ENCODE measurements at regions of chr5 and their contacts with region 1.

Region 1: DNA sequence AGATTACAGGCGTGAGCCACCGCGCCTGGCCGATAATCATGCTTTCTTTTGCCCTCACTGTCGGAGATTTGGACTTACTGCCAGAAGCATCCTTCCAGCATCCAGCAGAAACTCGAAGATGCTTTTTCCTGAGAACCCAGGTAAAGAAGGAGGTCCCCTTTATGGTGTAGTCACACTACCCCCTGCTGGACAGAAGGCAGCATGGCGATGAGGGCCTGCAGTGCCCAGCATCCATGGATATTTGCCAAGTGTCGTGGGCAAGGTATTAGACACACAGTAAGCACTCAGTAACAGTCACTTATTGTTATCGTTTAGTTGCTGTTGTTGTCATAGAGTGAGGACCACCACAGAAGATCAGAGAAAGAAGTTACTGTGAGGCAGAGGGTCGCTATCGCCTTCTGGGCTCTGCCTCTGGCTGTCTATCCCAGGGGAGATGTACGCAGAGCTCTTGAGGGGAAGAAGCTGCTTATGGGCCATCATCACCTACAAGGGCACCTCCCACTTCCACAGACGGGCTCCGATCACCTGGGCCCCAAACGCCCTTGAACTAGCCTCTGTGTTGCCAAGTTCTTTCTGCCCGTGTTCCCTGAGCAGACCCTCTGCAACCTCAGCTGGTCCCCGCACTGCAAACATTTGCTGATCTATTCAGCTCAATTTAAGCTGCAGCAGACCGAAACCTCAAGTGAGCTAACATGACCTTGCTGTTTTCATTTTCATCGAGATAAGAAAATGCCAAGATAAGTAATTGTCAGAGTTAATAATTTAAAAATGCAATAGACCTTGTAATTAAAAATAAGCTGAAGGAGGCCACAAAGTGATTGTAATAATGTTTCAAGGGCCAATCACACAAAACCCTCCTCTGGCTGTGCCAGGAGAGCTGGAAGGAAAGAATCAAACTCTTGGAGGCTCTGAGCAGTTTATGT is 23.9 kb downstream of the C5orf15 start:
- DNase-seq: peak; percentile 77
- ATAC-seq: peak; percentile 88
- H3K4me3 ChIP-seq: no peak overlapping the region
- H3K4me3 Mint-ChIP-seq: no peak overlapping the region
- H3K27ac ChIP-seq: no peak overlapping the region
- H3K27ac Mint-ChIP-seq: no peak overlapping the region
- H3K4me1 ChIP-seq: peaks cover 31 to 47% of the 10 kb centered on the region in 2 donors
- H3K4me1 Mint-ChIP-seq: peaks cover 36% of the 10 kb centered on the region
- H3K27me3 ChIP-seq: no peaks in the 10 kb centered on the region
- H3K27me3 Mint-ChIP-seq: no peaks in the 10 kb centered on the region
- CTCF ChIP-seq: peak; percentile 88

Region 2: GRCh38 chr5:133111299-133111698 is 833.2 kb before region 1 on chr5:
- CTCF ChIA-PET with region 1: interaction called, 14 read pairs
- POLR2A ChIA-PET with region 1: no interaction called
- intact Hi-C with region 1: loop called (anchors 1 kb)
- DNase-seq: peak; percentile 88
- ATAC-seq: peak; percentile 60
- H3K4me3 ChIP-seq: no peak overlapping the region
- H3K4me3 Mint-ChIP-seq: no peak overlapping the region
- H3K27ac ChIP-seq: no peak overlapping the region
- H3K27ac Mint-ChIP-seq: peak overlapping the region; percentile 0
- H3K4me1 ChIP-seq: peaks cover 37 to 39% of the 10 kb centered on the region in 2 donors
- H3K4me1 Mint-ChIP-seq: peaks cover 59% of the 10 kb centered on the region
- H3K27me3 ChIP-seq: no peaks in the 10 kb centered on the region
- H3K27me3 Mint-ChIP-seq: no peaks in the 10 kb centered on the region
- CTCF ChIP-seq: peak; percentile 97

Region 3: DNA sequence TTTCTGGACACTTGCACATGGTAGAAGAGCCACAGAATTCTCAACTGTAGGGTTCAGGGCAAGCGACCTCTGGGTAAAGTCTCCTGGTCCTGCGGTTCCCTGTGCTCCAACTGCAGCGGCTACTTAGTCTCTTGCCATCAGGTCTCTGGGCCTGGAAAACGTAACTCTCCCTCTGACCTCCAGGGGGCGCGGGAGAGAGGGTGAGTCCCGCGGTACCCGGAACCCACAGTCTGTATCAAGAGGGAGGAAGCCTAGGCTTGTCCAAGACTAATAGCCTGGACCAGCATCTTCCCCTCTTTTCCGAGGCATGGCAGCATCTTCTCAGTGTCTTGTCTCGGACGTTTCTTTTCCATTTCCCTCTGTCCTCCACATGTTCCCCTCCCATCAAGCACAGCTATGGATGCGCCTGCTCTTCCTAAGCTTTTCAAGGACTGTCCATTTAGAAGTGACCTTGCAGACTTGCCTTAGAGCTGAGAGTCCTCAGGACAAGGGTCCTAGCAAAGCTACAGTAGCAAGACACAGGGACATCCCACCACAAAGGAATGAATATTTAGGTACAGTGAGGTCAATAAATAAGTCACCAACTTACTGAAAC is 391.5 kb before region 1 on chr5:
- CTCF ChIA-PET with region 1: interaction called, 10 read pairs
- POLR2A ChIA-PET with region 1: no interaction called
- intact Hi-C with region 1: no loop called
- DNase-seq: peak; percentile 76
- ATAC-seq: peak; percentile 67
- H3K4me3 ChIP-seq: no peak overlapping the region
- H3K4me3 Mint-ChIP-seq: no peak overlapping the region
- H3K27ac ChIP-seq: no peak overlapping the region
- H3K27ac Mint-ChIP-seq: no peak overlapping the region
- H3K4me1 ChIP-seq: no peaks in the 10 kb centered on the region
- H3K4me1 Mint-ChIP-seq: peaks cover 3% of the 10 kb centered on the region
- H3K27me3 ChIP-seq: peaks cover 0 to 6% (median 6%) of the 10 kb centered on the region in 4 experiments
- H3K27me3 Mint-ChIP-seq: peaks cover 57% of the 10 kb centered on the region
- CTCF ChIP-seq: peak; percentile 89

Region 4: GRCh38 chr5:133907075-133907474 is 37.4 kb before region 1 on chr5:
- CTCF ChIA-PET with region 1: interaction called, 62 read pairs
- POLR2A ChIA-PET with region 1: no interaction called
- intact Hi-C with region 1: loop called (anchors 1 kb)
- DNase-seq: no peak
- ATAC-seq: no peak
- H3K4me3 ChIP-seq: no peak overlapping the region
- H3K4me3 Mint-ChIP-seq: no peak overlapping the region
- H3K27ac ChIP-seq: peak overlapping the region in 1 of 2 donors; percentile 56
- H3K27ac Mint-ChIP-seq: peak overlapping the region; percentile 50
- H3K4me1 ChIP-seq: peaks cover 0 to 12% of the 10 kb centered on the region in 2 donors
- H3K4me1 Mint-ChIP-seq: peaks cover 20% of the 10 kb centered on the region
- H3K27me3 ChIP-seq: no peaks in the 10 kb centered on the region
- H3K27me3 Mint-ChIP-seq: no peaks in the 10 kb centered on the region
- CTCF ChIP-seq: no peak

Region 5: GRCh38 chr5:133977161-133977787 is 32.8 kb after region 1 on chr5:
- CTCF ChIA-PET with region 1: interaction called, 15 read pairs
- POLR2A ChIA-PET with region 1: no interaction called
- intact Hi-C with region 1: no loop called
- DNase-seq: peak; percentile 34
- ATAC-seq: no peak
- H3K4me3 ChIP-seq: no peak overlapping the region
- H3K4me3 Mint-ChIP-seq: peak overlapping the region; percentile 8
- H3K27ac ChIP-seq: peak overlapping the region in 1 of 2 donors; percentile 59
- H3K27ac Mint-ChIP-seq: peak overlapping the region; percentile 52
- H3K4me1 ChIP-seq: peaks cover 17 to 27% of the 10 kb centered on the region in 2 donors
- H3K4me1 Mint-ChIP-seq: peaks cover 17% of the 10 kb centered on the region
- H3K27me3 ChIP-seq: no peaks in the 10 kb centered on the region
- H3K27me3 Mint-ChIP-seq: no peaks in the 10 kb centered on the region
- CTCF ChIP-seq: no peak

Region 6: DNA sequence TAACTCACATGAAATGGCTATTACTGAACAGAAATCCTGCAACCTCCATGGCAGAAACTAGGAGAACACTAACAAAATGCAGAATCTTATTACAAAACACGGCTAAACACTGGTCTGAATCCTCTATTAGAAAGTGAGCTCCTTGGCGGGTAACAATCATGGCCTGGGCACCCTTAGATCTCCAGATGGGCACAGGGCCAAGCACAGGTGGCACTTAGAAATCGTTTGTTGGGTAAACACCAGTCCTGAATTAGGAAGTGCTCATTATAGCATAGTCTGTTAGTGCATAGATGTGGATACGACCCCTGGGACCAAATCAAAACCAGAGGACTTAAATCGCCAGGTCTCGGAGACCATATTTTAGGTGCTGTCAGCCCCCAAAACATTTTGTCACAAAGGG is 45.9 kb after region 1 on chr5:
- CTCF ChIA-PET with region 1: no interaction called
- POLR2A ChIA-PET with region 1: no interaction called
- intact Hi-C with region 1: no loop called
- DNase-seq: no peak
- ATAC-seq: no peak
- H3K4me3 ChIP-seq: no peak overlapping the region
- H3K4me3 Mint-ChIP-seq: no peak overlapping the region
- H3K27ac ChIP-seq: no peak overlapping the region
- H3K27ac Mint-ChIP-seq: no peak overlapping the region
- H3K4me1 ChIP-seq: peaks cover 5 to 13% of the 10 kb centered on the region in 2 donors
- H3K4me1 Mint-ChIP-seq: peaks cover 42% of the 10 kb centered on the region
- H3K27me3 ChIP-seq: no peaks in the 10 kb centered on the region
- H3K27me3 Mint-ChIP-seq: no peaks in the 10 kb centered on the region
- CTCF ChIP-seq: no peak

Region 7: GRCh38 chr5:134794082-134794481 is 849.6 kb after region 1 on chr5:
- CTCF ChIA-PET with region 1: no interaction called
- POLR2A ChIA-PET with region 1: no interaction called
- intact Hi-C with region 1: no loop called
- DNase-seq: no peak
- ATAC-seq: no peak
- H3K4me3 ChIP-seq: no peak overlapping the region
- H3K4me3 Mint-ChIP-seq: no peak overlapping the region
- H3K27ac ChIP-seq: no peak overlapping the region
- H3K27ac Mint-ChIP-seq: no peak overlapping the region
- H3K4me1 ChIP-seq: no peaks in the 10 kb centered on the region
- H3K4me1 Mint-ChIP-seq: no peaks in the 10 kb centered on the region
- H3K27me3 ChIP-seq: no peaks in the 10 kb centered on the region
- H3K27me3 Mint-ChIP-seq: no peaks in the 10 kb centered on the region
- CTCF ChIP-seq: no peak